CD8-positive, alpha-beta T cell (primary cell): ENCODE measurements at regions of chr1 and their contacts with region 1.

Region 1: DNA sequence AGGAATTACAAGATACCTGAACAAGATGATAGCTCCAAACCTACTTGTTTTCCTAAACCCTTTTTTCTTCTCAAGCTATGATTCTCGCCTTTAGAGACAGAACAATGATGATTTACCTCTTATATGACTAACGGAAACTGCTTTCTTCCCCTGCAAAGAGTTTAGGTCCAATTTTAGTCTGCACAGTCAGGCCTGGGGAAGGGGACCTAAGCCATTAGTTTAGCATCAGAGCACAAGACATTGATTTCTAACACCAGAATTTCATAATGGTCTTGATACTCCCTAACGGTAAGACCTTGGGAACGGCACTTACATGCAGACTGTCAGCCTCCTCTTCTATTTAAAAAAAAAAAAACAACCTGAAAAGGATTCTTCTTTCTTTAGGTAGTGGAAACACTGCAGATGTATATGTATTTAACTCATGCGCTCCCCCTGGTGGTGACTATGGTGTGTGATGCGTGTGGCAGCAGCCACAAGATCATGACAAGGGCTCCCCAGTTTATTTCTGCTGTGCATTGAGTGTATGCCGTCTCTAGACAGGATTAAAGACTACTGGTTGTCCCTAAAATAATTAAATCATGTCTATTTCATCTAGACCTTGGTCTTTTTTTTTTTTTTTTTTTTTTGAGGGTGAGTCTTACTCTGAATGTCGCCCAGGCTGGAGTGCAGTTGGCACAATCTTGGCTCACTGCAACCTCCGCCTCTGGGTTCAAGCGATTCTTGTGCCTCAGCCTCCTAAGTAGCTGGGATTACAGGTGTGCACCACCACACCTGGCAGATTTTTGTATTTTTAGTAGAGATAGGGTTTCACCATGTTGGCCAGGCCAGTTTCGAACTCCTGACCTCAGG is 37.3 kb upstream of the TMEM222 start:
- DNase-seq: peak; percentile 79 to 94 (median 88)
- ATAC-seq: peak; percentile 98
- H3K4me3 ChIP-seq: no peak overlapping the region
- H3K4me3 Mint-ChIP-seq: no peak overlapping the region
- H3K27ac ChIP-seq: no peak overlapping the region
- H3K27ac Mint-ChIP-seq: no peak overlapping the region
- H3K4me1 ChIP-seq: no peaks in the 10 kb centered on the region
- H3K4me1 Mint-ChIP-seq: peaks cover 5% of the 10 kb centered on the region
- H3K27me3 ChIP-seq: no peaks in the 10 kb centered on the region
- H3K27me3 Mint-ChIP-seq: no peaks in the 10 kb centered on the region
- CTCF ChIP-seq: peak; percentile 87

Region 2: GRCh38 chr1:27097484-27097917 is 187.1 kb before region 1 on chr1:
- CTCF ChIA-PET with region 1: interaction called, 189 read pairs
- POLR2A ChIA-PET with region 1: interaction called, 4 read pairs
- intact Hi-C with region 1: loop called in 1 of 2 experiments (anchors 1 kb)
- DNase-seq: peak; percentile 47 to 83 (median 73)
- ATAC-seq: peak; percentile 100
- H3K4me3 ChIP-seq: no peak overlapping the region
- H3K4me3 Mint-ChIP-seq: no peak overlapping the region
- H3K27ac ChIP-seq: no peak overlapping the region
- H3K27ac Mint-ChIP-seq: no peak overlapping the region
- H3K4me1 ChIP-seq: no peaks in the 10 kb centered on the region
- H3K4me1 Mint-ChIP-seq: peaks cover 3% of the 10 kb centered on the region
- H3K27me3 ChIP-seq: no peaks in the 10 kb centered on the region
- H3K27me3 Mint-ChIP-seq: no peaks in the 10 kb centered on the region
- CTCF ChIP-seq: peak; percentile 90

Region 3: DNA sequence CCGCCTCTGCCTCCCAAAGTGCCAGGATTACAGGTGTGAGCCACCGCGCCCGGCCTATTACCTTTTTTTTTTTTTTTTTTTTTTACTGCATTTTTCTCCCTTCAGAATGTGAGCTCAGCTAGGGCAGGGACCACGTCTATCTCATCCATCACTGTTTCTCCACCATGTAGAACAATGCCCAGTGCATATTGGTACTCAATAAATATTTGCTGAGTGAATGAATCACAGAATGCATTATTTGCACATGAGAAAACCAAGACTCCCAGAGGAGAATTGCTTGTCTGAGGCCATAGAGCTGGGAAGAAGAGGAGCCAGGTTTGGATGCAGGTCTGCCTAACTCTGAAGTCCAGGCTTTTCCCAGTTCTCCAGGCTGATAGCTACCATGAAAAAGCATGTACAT is 121.5 kb before region 1 on chr1:
- CTCF ChIA-PET with region 1: no interaction called
- POLR2A ChIA-PET with region 1: no interaction called
- intact Hi-C with region 1: no loop called
- DNase-seq: no peak
- ATAC-seq: no peak
- H3K4me3 ChIP-seq: no peak overlapping the region
- H3K4me3 Mint-ChIP-seq: no peak overlapping the region
- H3K27ac ChIP-seq: no peak overlapping the region
- H3K27ac Mint-ChIP-seq: no peak overlapping the region
- H3K4me1 ChIP-seq: peaks cover 11% of the 10 kb centered on the region
- H3K4me1 Mint-ChIP-seq: peaks cover 11% of the 10 kb centered on the region
- H3K27me3 ChIP-seq: peaks cover 0 to 2% of the 10 kb centered on the region in 2 experiments
- H3K27me3 Mint-ChIP-seq: no peaks in the 10 kb centered on the region
- CTCF ChIP-seq: no peak

Region 4: GRCh38 chr1:27192039-27192529 is 92.6 kb before region 1 on chr1:
- CTCF ChIA-PET with region 1: interaction called, 51 read pairs
- POLR2A ChIA-PET with region 1: no interaction called
- intact Hi-C with region 1: no loop called
- DNase-seq: no peak
- ATAC-seq: no peak
- H3K4me3 ChIP-seq: no peak overlapping the region
- H3K4me3 Mint-ChIP-seq: no peak overlapping the region
- H3K27ac ChIP-seq: no peak overlapping the region
- H3K27ac Mint-ChIP-seq: no peak overlapping the region
- H3K4me1 ChIP-seq: no peaks in the 10 kb centered on the region
- H3K4me1 Mint-ChIP-seq: no peaks in the 10 kb centered on the region
- H3K27me3 ChIP-seq: no peaks in the 10 kb centered on the region
- H3K27me3 Mint-ChIP-seq: no peaks in the 10 kb centered on the region
- CTCF ChIP-seq: no peak

Region 5: DNA sequence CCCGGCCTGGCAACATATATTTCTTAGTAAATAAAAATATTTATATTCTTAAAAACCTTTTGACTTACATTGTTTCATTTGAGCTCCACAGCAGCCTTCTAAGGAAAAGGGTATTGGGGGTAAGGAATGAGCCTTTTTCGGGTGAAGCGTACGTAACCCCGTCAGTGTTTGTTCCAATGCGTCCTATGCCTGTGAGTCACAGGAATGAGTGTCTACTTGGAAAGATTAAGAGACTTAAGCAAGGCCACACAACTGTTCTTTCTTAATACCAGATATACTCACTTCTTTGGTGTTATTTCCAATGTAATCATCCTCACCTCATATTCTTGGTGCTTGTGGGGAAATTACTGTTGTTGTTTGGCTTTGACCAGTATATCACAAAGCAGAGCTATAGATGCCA is 27.5 kb before region 1 on chr1:
- CTCF ChIA-PET with region 1: interaction called, 17 read pairs
- POLR2A ChIA-PET with region 1: interaction called, 3 read pairs
- intact Hi-C with region 1: no loop called
- DNase-seq: no peak
- ATAC-seq: no peak
- H3K4me3 ChIP-seq: no peak overlapping the region
- H3K4me3 Mint-ChIP-seq: no peak overlapping the region
- H3K27ac ChIP-seq: no peak overlapping the region
- H3K27ac Mint-ChIP-seq: no peak overlapping the region
- H3K4me1 ChIP-seq: peaks cover 45% of the 10 kb centered on the region
- H3K4me1 Mint-ChIP-seq: peaks cover 44% of the 10 kb centered on the region
- H3K27me3 ChIP-seq: no peaks in the 10 kb centered on the region
- H3K27me3 Mint-ChIP-seq: no peaks in the 10 kb centered on the region
- CTCF ChIP-seq: no peak

Region 6: GRCh38 chr1:27307874-27308598 is 23.4 kb after region 1 on chr1:
- CTCF ChIA-PET with region 1: no interaction called
- POLR2A ChIA-PET with region 1: no interaction called
- intact Hi-C with region 1: no loop called
- DNase-seq: no peak
- ATAC-seq: no peak
- H3K4me3 ChIP-seq: no peak overlapping the region
- H3K4me3 Mint-ChIP-seq: no peak overlapping the region
- H3K27ac ChIP-seq: no peak overlapping the region
- H3K27ac Mint-ChIP-seq: no peak overlapping the region
- H3K4me1 ChIP-seq: no peaks in the 10 kb centered on the region
- H3K4me1 Mint-ChIP-seq: no peaks in the 10 kb centered on the region
- H3K27me3 ChIP-seq: no peaks in the 10 kb centered on the region
- H3K27me3 Mint-ChIP-seq: no peaks in the 10 kb centered on the region
- CTCF ChIP-seq: no peak

Region 7: DNA sequence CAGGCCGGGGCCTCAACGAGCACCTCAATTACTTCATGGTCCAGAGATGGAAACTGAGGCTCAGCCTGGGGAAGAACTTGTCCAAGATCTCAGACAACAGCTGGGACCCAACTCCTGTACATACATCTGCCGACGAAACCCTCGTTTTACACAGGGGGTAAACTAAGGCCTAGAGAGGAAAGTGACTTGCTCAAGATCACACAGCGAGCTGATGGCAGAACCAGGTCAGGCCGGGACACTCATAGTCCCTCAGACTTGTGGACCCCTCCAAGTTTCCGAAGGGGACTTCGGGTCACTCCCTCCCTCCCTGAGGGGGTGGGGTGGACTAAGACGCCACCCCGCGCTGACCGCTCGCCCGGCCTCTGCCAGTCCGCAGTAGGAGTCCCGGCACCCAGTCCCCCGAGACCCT is 204.9 kb after region 1 on chr1:
- CTCF ChIA-PET with region 1: no interaction called
- POLR2A ChIA-PET with region 1: no interaction called
- intact Hi-C with region 1: no loop called
- DNase-seq: peak in 5 of 9 experiments; percentile 21 to 67 (median 39)
- ATAC-seq: peak; percentile 3
- H3K4me3 ChIP-seq: peak overlapping the region; percentile 97 to 99
- H3K4me3 Mint-ChIP-seq: peak overlapping the region; percentile 98
- H3K27ac ChIP-seq: peak overlapping the region; percentile 93 to 97
- H3K27ac Mint-ChIP-seq: peak overlapping the region; percentile 94
- H3K4me1 ChIP-seq: peaks cover 19% of the 10 kb centered on the region
- H3K4me1 Mint-ChIP-seq: peaks cover 38% of the 10 kb centered on the region
- H3K27me3 ChIP-seq: no peaks in the 10 kb centered on the region
- H3K27me3 Mint-ChIP-seq: no peaks in the 10 kb centered on the region
- CTCF ChIP-seq: no peak